GM13976 (cell line): ENCODE measurements at regions of chr17 and their contacts with region 1.

Region 1: DNA sequence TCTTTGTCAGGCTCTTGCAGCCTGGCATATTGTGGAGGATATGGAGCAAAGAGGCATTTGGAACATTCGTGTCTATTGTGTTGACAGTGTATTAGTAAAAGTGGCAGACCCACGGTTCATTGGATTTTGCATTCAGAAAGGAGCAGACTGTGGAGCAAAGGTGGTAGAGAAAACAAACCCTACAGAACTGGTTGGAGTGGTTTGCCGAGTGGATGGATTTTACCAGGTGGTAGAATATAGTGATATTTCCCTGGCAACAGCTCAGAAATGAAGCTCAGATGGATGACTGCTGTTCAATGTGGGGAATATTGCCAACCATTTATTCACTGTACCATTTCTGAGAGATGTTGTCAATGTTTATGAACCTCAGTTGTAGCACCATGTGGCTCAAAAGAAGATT is 44.5 kb downstream of the EFCAB13 start:
- DNase-seq: no peak
- CTCF ChIP-seq: no peak

Region 2: GRCh38 chr17:47776330-47777197 is 408.3 kb after region 1 on chr17:
- in situ Hi-C with region 1: loop called (anchors 25 kb)
- DNase-seq: peak; percentile 77
- CTCF ChIP-seq: peak; percentile 67